ENCODE measurements at regions of chr5 and their contacts with region 1.

Region 1: DNA sequence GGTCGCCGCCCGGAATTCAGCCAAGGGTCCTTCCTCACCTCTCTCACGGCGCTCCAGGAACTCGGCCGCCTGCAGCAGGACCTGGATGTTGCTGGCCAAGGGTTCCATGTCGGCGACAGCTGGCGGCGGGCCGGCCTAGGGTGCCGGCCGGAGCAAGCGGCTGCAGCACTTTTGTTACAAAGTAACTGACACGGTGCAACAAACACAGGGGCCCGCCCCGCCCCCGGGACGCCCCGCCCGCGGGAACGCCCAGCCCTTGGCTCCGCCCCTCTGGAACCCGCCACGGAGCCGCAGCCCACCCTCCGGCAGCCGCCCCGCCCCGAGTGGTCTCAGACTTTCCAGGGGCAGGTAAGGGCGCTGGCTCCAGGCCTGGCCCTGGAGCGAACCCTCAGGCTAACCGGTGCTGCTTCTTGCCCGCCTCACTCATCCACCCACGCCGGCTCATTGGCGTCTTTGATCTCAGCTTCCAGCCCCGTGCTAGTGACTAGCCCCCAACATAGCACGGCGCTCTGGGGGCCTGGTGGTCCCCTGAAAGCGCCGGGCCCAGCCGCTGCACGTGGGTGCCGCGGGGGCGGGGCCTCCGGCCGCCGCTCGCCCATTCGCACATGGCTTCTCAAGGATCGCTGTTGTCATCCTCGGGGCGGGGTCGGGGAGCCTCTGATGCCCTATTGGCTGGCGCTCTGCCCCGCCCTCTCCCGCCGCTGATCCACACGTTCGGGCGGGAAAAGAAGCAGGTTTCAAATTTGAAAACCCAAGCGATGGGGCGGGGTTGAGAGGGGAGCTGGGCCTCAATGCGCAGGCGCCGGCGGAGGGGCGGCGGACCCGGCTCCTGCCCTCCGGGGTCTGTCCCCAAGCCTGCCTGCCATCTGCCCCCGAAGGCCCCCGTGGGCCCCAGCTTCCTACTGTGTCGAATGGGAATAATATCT is at the start of gene MXD3:
- DNase-seq: peak; percentile 93 to 97 (median 97)
- ATAC-seq: peak; percentile 81
- H3K4me3 ChIP-seq: no peak within 1 kb of the TSS
- H3K27ac ChIP-seq: peak within 1 kb of the TSS in 3 of 4 donors; percentile 30 to 62 (median 56)
- H3K4me1 ChIP-seq: peaks cover 59% of the 10 kb centered on the region
- H3K27me3 ChIP-seq: no peaks in the 10 kb centered on the region
- CTCF ChIP-seq: no peak
- POLR2A ChIP-seq: no peak
- total RNA-seq, gene MXD3: 13.2 to 21.4 TPM

Region 2: GRCh38 chr5:177378884-177379883 is 67.2 kb after region 1 on chr5:
- intact Hi-C with region 1: loop called (anchors 5 kb)
- DNase-seq: no peak
- ATAC-seq: peak; percentile 60
- H3K4me3 ChIP-seq: no peak overlapping the region
- H3K27ac ChIP-seq: peak overlapping the region in 3 of 4 donors; percentile 6 to 52 (median 44)
- H3K4me1 ChIP-seq: peaks cover 21% of the 10 kb centered on the region
- H3K27me3 ChIP-seq: no peaks in the 10 kb centered on the region
- CTCF ChIP-seq: no peak
- POLR2A ChIP-seq: no peak

Region 3: GRCh38 chr5:177473461-177474001 is 161.5 kb after region 1 on chr5 and contains the start of gene DBN1:
- intact Hi-C with region 1: loop called (anchors 10 kb)
- DNase-seq: peak; percentile 34 to 60 (median 50)
- ATAC-seq: peak; percentile 80
- H3K4me3 ChIP-seq: peak within 1 kb of the TSS; percentile 48 to 57
- H3K27ac ChIP-seq: peak within 1 kb of the TSS in 2 of 4 donors; percentile 47 to 48
- H3K4me1 ChIP-seq: peaks cover 18% of the 10 kb centered on the region
- H3K27me3 ChIP-seq: no peaks in the 10 kb centered on the region
- CTCF ChIP-seq: no peak
- POLR2A ChIP-seq: peak in 2 of 3 donors; percentile 19 to 25
- total RNA-seq, gene DBN1: 28.0 to 29.0 TPM